ENCODE measurements at regions of chr17 and their contacts with region 1.

Region 1: GRCh38 chr17:1716076-1716995 is 6.2 kb upstream of the TLCD2 start:
- DNase-seq: peak; percentile 100
- H3K4me3 Mint-ChIP-seq: peak overlapping the region; percentile 97
- H3K27ac Mint-ChIP-seq: peak overlapping the region; percentile 98
- H3K4me1 Mint-ChIP-seq: peaks cover 26% of the 10 kb centered on the region
- H3K27me3 Mint-ChIP-seq: peaks cover 3% of the 10 kb centered on the region

Region 2: GRCh38 chr17:1455797-1456599 is 260.3 kb before region 1 on chr17 and contains the start of gene CRK:
- intact Hi-C with region 1: loop called (anchors 5 kb)
- DNase-seq: peak; percentile 99
- H3K4me3 Mint-ChIP-seq: peak within 1 kb of the TSS; percentile 92
- H3K27ac Mint-ChIP-seq: peak within 1 kb of the TSS; percentile 90
- H3K4me1 Mint-ChIP-seq: peaks cover 29% of the 10 kb centered on the region
- H3K27me3 Mint-ChIP-seq: peaks cover 13% of the 10 kb centered on the region
- total RNA-seq, gene CRK: 19.8 and 24.2 TPM in 2 replicates

Region 3: DNA sequence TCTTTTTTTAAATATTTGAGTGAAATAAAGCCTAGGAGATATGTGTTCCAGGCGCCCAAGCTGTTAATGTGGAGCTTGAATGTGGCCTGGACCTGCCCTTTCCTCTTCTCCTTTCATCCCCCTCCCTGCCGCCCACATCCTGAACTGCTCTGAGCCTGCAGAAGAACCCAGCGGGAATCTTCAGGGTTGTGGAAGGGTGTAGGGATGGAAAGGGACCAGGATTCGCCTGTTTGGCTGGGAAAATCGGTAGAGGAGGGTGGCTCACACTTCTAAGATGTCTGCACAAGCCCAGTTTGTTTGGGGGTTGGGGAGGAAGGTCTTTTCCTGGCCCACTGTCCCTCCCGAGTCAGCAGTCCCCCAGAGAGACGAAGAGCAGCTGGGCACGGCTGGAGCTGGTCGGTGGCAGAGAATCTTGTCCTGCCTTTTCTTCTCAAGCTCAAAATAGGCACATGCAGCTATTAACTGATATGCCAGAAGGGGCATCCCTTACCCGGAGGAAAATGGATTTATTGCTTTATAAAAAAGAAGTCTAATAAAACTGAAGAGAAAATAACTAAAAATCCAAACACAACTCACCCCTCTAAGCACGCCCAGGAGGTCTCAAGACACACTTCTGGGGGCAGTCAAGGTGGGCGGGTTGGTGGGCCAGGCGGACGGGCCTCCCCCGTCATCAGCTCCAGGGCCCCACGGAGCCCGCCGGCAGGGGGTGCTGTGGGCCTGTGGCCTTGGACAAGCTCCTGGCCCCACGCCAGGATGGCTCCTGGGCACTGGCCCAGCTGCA is 142.2 kb before region 1 on chr17:
- intact Hi-C with region 1: no loop called
- DNase-seq: peak; percentile 40
- H3K4me3 Mint-ChIP-seq: no peak overlapping the region
- H3K27ac Mint-ChIP-seq: no peak overlapping the region
- H3K4me1 Mint-ChIP-seq: peaks cover 6% of the 10 kb centered on the region
- H3K27me3 Mint-ChIP-seq: peaks cover 3% of the 10 kb centered on the region

Region 4: DNA sequence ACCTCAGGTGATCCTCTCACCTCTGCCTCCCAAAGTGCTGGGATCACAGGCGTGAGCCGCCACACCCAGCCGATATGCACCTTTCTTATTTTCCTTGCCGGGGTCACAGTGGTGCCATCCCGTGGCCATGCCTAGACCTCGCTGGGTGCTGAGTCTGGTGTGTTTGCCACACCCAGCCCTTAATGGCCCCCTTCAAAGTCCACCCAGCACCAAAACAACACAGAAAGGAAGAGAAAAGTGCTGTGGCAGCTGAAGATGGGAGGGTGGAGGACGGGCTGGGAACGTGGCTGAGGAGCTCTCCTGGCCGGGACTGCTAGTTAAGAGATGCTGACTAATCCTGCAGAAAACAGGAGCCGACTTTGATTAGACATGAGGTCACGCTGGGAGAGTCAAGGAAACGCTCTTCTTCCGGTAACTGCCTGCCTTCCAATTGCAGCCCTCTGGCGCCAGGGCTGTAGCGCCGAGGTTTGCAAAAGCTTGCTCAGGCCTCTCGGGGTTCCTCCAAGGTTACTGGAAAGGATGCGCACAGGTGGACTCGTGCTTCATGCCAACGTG is 98.6 kb before region 1 on chr17:
- intact Hi-C with region 1: no loop called
- DNase-seq: no peak
- H3K4me3 Mint-ChIP-seq: no peak overlapping the region
- H3K27ac Mint-ChIP-seq: no peak overlapping the region
- H3K4me1 Mint-ChIP-seq: no peaks in the 10 kb centered on the region
- H3K27me3 Mint-ChIP-seq: no peaks in the 10 kb centered on the region

Region 5: DNA sequence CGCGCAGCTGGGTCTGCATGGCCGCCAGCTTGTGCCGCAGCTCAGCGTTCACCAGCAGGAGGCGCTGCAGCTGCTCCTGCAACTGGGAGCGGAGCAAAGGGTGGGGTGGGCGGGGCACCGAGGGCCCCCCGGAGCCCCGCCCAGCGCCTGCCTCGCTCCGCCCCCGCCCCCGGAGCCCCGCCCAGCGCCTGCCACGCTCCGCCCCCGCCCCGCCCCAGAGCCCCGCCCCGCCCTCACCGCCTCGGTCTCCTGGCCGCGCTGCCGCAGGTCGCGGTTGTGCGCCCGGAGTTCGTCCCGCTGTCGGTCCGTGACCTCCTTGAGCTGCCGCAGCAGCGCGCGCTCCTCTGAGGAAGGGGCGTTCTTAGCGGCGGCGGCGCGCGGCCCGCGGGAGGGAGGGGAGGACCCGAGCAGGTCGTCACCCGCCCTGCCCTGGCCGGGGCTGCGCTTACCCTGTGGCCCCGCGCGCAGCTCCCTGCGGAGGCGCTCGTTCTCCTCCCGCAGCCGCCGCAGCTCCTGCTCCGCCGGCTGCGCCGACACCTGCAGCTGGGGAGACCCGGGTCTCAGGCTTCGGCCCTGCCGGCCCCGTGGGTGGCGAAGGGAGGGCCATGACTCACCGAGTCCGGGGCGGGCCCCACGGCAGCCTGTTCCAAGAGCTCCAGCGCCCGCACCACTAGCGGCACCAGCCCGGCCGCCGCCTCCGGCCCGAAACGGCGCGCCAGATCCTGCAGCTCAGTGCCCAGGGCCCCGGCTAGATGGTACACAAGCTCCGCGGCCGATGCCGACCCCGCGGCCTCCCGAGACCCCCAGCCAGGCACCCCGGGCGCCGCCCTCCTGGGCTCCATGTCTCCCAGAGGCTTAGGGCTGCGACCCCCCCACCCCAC is 67.1 kb before region 1 on chr17:
- intact Hi-C with region 1: loop called (anchors 1 kb)
- DNase-seq: peak; percentile 92
- H3K4me3 Mint-ChIP-seq: peak overlapping the region; percentile 59
- H3K27ac Mint-ChIP-seq: no peak overlapping the region
- H3K4me1 Mint-ChIP-seq: peaks cover 22% of the 10 kb centered on the region
- H3K27me3 Mint-ChIP-seq: peaks cover 2% of the 10 kb centered on the region

Region 6: GRCh38 chr17:1684378-1685189 is 31.8 kb before region 1 on chr17 and contains the start of gene PRPF8:
- intact Hi-C with region 1: loop called (anchors 1 kb)
- DNase-seq: peak; percentile 98
- H3K4me3 Mint-ChIP-seq: peak within 1 kb of the TSS; percentile 97
- H3K27ac Mint-ChIP-seq: peak within 1 kb of the TSS; percentile 93
- H3K4me1 Mint-ChIP-seq: peaks cover 36% of the 10 kb centered on the region
- H3K27me3 Mint-ChIP-seq: no peaks in the 10 kb centered on the region
- total RNA-seq, gene PRPF8: 405 and 410 TPM in 2 replicates

Region 7: GRCh38 chr17:1870592-1870991 is 154.3 kb after region 1 on chr17:
- intact Hi-C with region 1: loop called (anchors 1 kb)
- DNase-seq: peak; percentile 28
- H3K4me3 Mint-ChIP-seq: peak overlapping the region; percentile 62
- H3K27ac Mint-ChIP-seq: peak overlapping the region; percentile 99
- H3K4me1 Mint-ChIP-seq: peaks cover 75% of the 10 kb centered on the region
- H3K27me3 Mint-ChIP-seq: no peaks in the 10 kb centered on the region

Region 8: GRCh38 chr17:2303204-2304188 is 587.2 kb after region 1 on chr17 and contains the starts of genes SMG6 and SRR:
- intact Hi-C with region 1: loop called (anchors 1 kb)
- DNase-seq: peak; percentile 88
- H3K4me3 Mint-ChIP-seq: peak within 1 kb of the TSS; percentile 92
- H3K27ac Mint-ChIP-seq: peak within 1 kb of the TSS; percentile 85
- H3K4me1 Mint-ChIP-seq: peaks cover 46% of the 10 kb centered on the region
- H3K27me3 Mint-ChIP-seq: no peaks in the 10 kb centered on the region
- total RNA-seq, gene SMG6: 35.3 and 39.5 TPM in 2 replicates
- total RNA-seq, gene SRR: 14.9 and 17.4 TPM in 2 replicates

Region 9: DNA sequence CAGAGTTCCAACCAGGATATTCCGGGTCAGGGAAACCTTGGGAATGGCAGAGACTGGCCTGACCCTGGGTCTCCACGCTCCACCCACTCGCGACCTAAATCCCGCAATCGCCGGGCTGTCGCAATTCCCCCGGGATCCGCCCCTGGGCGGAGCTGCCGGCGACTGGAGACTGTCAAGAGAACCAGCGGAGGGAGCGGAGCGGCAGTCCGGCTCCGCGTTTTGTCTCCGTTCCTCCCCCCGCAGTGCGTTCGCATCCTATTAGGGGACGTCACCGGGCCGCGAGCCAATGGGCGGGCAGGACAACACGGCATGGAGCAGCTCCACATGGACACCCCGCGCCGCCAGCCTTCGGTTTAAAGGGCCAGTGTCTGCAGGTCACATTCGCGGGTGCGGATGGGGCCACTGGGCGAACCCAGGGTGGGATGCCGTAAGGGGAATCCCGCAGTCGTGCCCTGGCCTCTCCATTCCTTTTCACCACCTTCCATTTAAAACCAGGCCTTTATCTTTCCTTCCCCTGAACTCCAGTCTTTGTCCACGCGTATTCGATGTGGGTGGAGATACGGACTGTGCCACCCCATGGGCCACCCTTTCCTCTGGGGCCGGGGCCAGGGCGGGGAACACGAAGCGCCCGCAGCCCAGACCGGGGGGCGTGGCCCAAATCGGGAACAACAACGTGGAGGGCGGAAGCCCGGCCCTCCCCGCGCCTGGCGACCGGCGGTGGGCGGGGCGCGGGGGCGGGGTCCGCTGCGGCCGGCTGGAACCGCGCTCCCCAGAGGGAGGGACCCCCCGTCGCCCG is 685.3 kb after region 1 on chr17:
- intact Hi-C with region 1: loop called (anchors 2 kb)
- DNase-seq: peak; percentile 100
- H3K4me3 Mint-ChIP-seq: peak overlapping the region; percentile 93
- H3K27ac Mint-ChIP-seq: peak overlapping the region; percentile 98
- H3K4me1 Mint-ChIP-seq: peaks cover 54% of the 10 kb centered on the region
- H3K27me3 Mint-ChIP-seq: no peaks in the 10 kb centered on the region

Measured in activated T-helper 1 cell treated with anti-CD3 and anti-CD28 coated beads, Interleukin-12 subunit alpha, Interleukin-12 subunit beta, Interleukin-2, Interleukin-4 antibody, amounts not matched to agents 30 ng/mL and 10 ng/mL and 1 ng/mL, durations not matched to agents 14 hours and 24 hours and 36 hours (primary cell).